Panc1 (cell line): ENCODE measurements at regions of chr7 and their contacts with region 1.

Region 1: GRCh38 chr7:153381275-153382040 is 621.9 kb downstream of the ACTR3B start:
- DNase-seq: peak; percentile 20
- ATAC-seq: peak; percentile 83
- H3K4me3 ChIP-seq: no peak overlapping the region
- H3K27ac ChIP-seq: no peak overlapping the region
- H3K4me1 ChIP-seq: no peaks in the 10 kb centered on the region
- H3K27me3 ChIP-seq: peaks cover 2% of the 10 kb centered on the region; the same call in 1 of the 2 replicates
- CTCF ChIP-seq: peak; percentile 84

Region 2: GRCh38 chr7:153835104-153835503 is 453.6 kb after region 1 on chr7:
- CTCF ChIA-PET with region 1: no interaction called
- POLR2A ChIA-PET with region 1: no interaction called
- in situ Hi-C with region 1: no loop called
- intact Hi-C with region 1: loop called (anchors 10 kb)
- DNase-seq: no peak
- ATAC-seq: no peak
- H3K4me3 ChIP-seq: no peak overlapping the region
- H3K27ac ChIP-seq: no peak overlapping the region
- H3K4me1 ChIP-seq: no peaks in the 10 kb centered on the region
- H3K27me3 ChIP-seq: 0 out of 2 replicates have a peak, but pooled peaks cover under 1% of the 10 kb centered on the region
- CTCF ChIP-seq: peak; percentile 19; the same call in 1 of the 2 replicates